Calu3 (cell line): ENCODE measurements at regions of chr13 and their contacts with region 1.

Region 1: GRCh38 chr13:87274209-87274819 is 396.9 kb upstream of the SLITRK5 start:
- DNase-seq: peak; percentile 11
- H3K4me3 Mint-ChIP-seq: no peak overlapping the region
- H3K27ac Mint-ChIP-seq: no peak overlapping the region
- H3K4me1 Mint-ChIP-seq: no peaks in the 10 kb centered on the region
- H3K27me3 Mint-ChIP-seq: no peaks in the 10 kb centered on the region
- CTCF ChIP-seq: no peak

Region 2: DNA sequence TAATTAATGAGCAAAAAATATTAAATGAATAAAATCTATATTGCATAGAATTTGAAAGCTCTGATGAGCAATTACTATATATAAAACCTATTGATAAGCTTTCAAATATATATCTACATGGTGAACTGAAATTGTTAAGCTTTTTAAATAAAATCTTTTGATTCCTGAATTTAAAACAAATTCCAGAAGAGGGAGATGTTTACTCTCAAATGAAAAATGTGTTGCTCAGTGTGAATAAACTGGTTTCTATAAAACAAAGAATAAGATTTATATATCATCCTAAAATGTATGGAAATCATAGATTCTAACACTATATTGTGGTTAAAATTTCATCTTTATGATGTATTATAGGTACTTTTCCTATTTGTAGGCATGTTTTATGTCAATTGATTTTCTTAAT is 1303.6 kb before region 1 on chr13:
- CTCF ChIA-PET with region 1: no interaction called
- intact Hi-C with region 1: loop called (anchors 10 kb)
- DNase-seq: no peak
- H3K4me3 Mint-ChIP-seq: no peak overlapping the region
- H3K27ac Mint-ChIP-seq: no peak overlapping the region
- H3K4me1 Mint-ChIP-seq: no peaks in the 10 kb centered on the region
- H3K27me3 Mint-ChIP-seq: no peaks in the 10 kb centered on the region
- CTCF ChIP-seq: no peak

Region 3: GRCh38 chr13:86870444-86870843 is 403.9 kb before region 1 on chr13:
- CTCF ChIA-PET with region 1: no interaction called
- intact Hi-C with region 1: loop called (anchors 2 kb)
- DNase-seq: peak; percentile 0
- H3K4me3 Mint-ChIP-seq: no peak overlapping the region
- H3K27ac Mint-ChIP-seq: no peak overlapping the region
- H3K4me1 Mint-ChIP-seq: no peaks in the 10 kb centered on the region
- H3K27me3 Mint-ChIP-seq: no peaks in the 10 kb centered on the region
- CTCF ChIP-seq: no peak

Region 4: GRCh38 chr13:87234981-87235380 is 39.3 kb before region 1 on chr13:
- CTCF ChIA-PET with region 1: no interaction called
- intact Hi-C with region 1: no loop called
- DNase-seq: no peak
- H3K4me3 Mint-ChIP-seq: no peak overlapping the region
- H3K27ac Mint-ChIP-seq: no peak overlapping the region
- H3K4me1 Mint-ChIP-seq: no peaks in the 10 kb centered on the region
- H3K27me3 Mint-ChIP-seq: no peaks in the 10 kb centered on the region
- CTCF ChIP-seq: no peak

Region 5: GRCh38 chr13:87311165-87311564 is 36.9 kb after region 1 on chr13:
- CTCF ChIA-PET with region 1: no interaction called
- intact Hi-C with region 1: no loop called
- DNase-seq: no peak
- H3K4me3 Mint-ChIP-seq: no peak overlapping the region
- H3K27ac Mint-ChIP-seq: no peak overlapping the region
- H3K4me1 Mint-ChIP-seq: no peaks in the 10 kb centered on the region
- H3K27me3 Mint-ChIP-seq: no peaks in the 10 kb centered on the region
- CTCF ChIP-seq: no peak

Region 6: GRCh38 chr13:87444135-87444534 is 169.8 kb after region 1 on chr13:
- CTCF ChIA-PET with region 1: no interaction called
- intact Hi-C with region 1: no loop called
- DNase-seq: no peak
- H3K4me3 Mint-ChIP-seq: no peak overlapping the region
- H3K27ac Mint-ChIP-seq: no peak overlapping the region
- H3K4me1 Mint-ChIP-seq: no peaks in the 10 kb centered on the region
- H3K27me3 Mint-ChIP-seq: no peaks in the 10 kb centered on the region
- CTCF ChIP-seq: no peak

Region 7: GRCh38 chr13:87754097-87754496 is 479.8 kb after region 1 on chr13:
- CTCF ChIA-PET with region 1: no interaction called
- intact Hi-C with region 1: no loop called
- DNase-seq: no peak
- H3K4me3 Mint-ChIP-seq: no peak overlapping the region
- H3K27ac Mint-ChIP-seq: no peak overlapping the region
- H3K4me1 Mint-ChIP-seq: no peaks in the 10 kb centered on the region
- H3K27me3 Mint-ChIP-seq: no peaks in the 10 kb centered on the region
- CTCF ChIP-seq: no peak